Right ventricle myocardium superior (tissue), 1 donor: ENCODE measurements at regions of chr17 and their contacts with region 1.

Region 1: DNA sequence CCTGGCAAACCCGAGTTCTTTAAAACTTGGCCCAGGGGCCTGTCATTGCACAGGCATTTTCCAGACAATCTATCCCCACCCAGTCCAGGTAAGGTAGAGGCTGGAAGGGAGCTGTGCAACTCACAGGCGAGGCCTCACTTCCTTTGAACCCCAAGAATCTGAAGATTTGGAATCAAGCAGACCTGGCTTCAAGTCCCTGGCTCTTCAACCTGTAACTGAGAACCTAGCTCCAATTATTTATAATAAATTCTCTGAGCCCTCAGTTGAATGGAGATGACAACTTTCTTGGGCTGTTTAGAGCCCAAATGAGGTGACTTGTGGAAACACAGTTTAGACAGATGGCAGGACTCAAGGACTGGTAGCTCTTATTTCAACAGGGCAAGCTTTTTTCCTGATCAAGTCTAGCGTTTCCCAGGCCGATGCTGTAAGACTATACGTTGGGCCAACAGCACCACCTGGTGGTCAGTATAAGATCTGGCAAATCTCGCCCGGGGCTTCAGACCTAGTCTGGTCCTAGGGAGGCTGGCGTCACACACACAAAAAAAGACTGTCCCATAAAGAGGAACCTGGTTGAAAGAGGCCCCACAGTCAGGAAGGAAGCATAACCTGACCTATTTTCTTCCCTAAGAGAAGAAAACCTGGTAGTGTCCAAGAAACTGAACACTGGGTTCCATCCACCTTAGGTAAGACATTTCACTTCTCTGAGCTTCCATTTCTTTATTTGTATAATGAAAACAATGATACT is 117.9 kb downstream of the C17orf67 start:
- DNase-seq: peak; percentile 77
- ATAC-seq: peak; percentile 95

Region 2: DNA sequence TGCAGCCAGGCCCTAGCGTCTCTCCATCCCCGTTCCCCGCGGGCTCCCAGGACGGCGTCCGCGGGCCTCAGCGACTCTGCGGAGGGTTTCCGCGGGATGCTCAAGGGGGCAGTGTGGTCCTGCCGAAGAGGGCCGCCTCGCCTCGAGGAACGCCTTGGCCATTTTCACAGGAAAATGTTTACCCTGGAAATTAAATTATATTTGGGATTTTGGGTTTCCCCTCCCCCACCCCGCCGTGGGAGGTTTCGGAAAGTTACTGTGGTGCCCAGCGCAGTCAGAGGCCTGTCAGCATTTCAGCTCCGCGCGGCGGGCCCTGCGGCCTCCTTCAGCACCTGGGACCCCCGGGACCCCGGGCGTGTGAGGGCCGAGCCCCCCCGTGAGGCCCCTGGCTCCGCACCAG is 870.4 kb before region 1 on chr17:
- intact Hi-C with region 1: loop called (anchors 10 kb)
- DNase-seq: peak; percentile 70
- ATAC-seq: peak; percentile 94

Region 3: GRCh38 chr17:56499799-56500388 is 215.9 kb before region 1 on chr17:
- intact Hi-C with region 1: loop called (anchors 10 kb)
- DNase-seq: no peak
- ATAC-seq: no peak

Region 4: DNA sequence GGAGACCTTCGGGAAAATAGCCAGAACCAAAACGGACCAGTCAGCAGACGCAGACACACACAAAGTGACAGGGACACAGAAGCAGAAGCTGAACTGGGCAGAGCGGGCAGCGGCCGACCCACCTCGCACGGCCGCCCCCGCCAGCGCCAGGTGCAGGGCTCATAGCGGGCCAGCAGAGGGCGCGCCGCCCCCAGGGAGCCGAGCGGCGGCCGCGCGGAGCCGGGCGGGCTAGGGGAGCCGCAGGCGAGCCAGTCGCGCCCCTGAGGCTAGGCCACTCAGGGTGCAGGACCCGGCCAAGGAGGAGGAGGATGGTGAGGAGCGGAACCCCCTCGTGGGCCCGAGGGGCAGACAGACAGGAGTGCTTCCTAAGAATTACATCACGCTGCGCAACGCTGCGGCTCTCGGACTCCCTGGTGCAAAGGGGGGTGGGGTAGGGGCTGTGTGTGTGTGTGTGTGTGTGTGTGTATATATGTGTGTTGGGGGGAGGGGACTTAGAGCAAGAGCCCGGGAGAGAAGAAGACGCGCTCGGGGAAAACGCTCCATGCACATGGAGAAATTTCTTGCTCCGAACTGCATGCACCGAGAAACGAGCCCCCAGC is 123.2 kb before region 1 on chr17:
- intact Hi-C with region 1: loop called (anchors 5 kb)
- DNase-seq: peak; percentile 73
- ATAC-seq: peak; percentile 89